OCI-LY7 (cell line): ENCODE measurements at regions of chr17 and their contacts with region 1.

Region 1: DNA sequence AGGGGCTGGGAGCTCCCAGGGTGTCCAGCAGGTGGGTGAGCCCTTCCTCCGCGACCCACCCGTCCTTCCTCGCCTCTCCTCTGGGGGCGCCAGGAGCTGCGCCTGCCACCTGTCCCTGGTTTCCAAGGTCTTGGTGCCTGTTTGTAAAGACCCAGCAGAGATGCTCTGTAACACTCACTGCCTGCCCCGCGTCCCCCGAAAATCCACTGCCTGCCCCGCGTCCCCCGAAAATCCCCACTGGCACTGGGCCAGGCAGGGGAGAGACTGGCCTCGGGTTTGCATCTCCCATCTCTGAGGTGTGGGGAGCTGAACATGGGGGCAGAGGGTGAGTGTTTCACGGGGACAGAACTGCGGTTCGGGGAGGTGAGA is 45.6 kb downstream of the BAHCC1 start:
- DNase-seq: peak; percentile 81
- H3K4me3 ChIP-seq: no peak overlapping the region
- H3K27ac ChIP-seq: no peak overlapping the region
- H3K4me1 ChIP-seq: peaks cover 9% of the 10 kb centered on the region
- CTCF ChIP-seq: peak; percentile 95

Region 2: GRCh38 chr17:81312624-81313314 is 128.1 kb before region 1 on chr17:
- CTCF ChIA-PET with region 1: interaction called, 16 read pairs
- POLR2A ChIA-PET with region 1: no interaction called
- intact Hi-C with region 1: no loop called
- DNase-seq: no peak
- H3K4me3 ChIP-seq: no peak overlapping the region
- H3K27ac ChIP-seq: no peak overlapping the region
- H3K4me1 ChIP-seq: no peaks in the 10 kb centered on the region
- CTCF ChIP-seq: no peak

Region 3: DNA sequence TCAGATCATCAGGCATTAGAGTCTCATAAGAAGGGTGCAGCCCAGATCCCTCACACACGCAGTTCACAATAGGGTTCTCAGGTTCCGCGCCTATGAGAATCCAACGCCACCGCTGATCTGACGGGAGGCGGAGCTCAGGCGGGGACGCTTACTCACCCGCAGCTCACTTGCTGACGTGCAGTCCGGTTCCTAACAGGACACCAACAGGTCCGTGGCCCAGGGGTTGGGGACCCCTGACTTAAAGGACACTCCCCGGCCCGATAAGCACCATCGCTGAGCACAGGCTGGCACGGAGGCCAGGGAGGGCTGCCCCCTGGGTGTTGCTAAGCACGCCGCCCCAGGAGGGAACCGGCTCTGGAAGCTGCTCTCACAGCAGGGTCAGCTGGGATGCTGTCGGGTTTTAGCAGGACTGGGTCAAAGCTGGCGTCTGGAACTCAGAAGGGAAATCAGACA is 75.7 kb before region 1 on chr17:
- CTCF ChIA-PET with region 1: no interaction called
- POLR2A ChIA-PET with region 1: no interaction called
- intact Hi-C with region 1: no loop called
- DNase-seq: no peak
- H3K4me3 ChIP-seq: no peak overlapping the region
- H3K27ac ChIP-seq: no peak overlapping the region
- H3K4me1 ChIP-seq: peaks cover 9% of the 10 kb centered on the region
- CTCF ChIP-seq: no peak